ENCODE measurements at regions of chr5 and their contacts with region 1.

Region 1: GRCh38 chr5:160475864-160476438 is 54.3 kb downstream of the PTTG1 start:
- DNase-seq: no peak
- H3K4me3 Mint-ChIP-seq: peak overlapping the region; percentile 50
- H3K27ac Mint-ChIP-seq: peak overlapping the region; percentile 62
- H3K4me1 Mint-ChIP-seq: peaks cover 91% of the 10 kb centered on the region
- H3K27me3 Mint-ChIP-seq: no peaks in the 10 kb centered on the region

Region 2: GRCh38 chr5:160054831-160055230 is 421.1 kb before region 1 on chr5:
- CTCF ChIA-PET with region 1: no interaction called
- POLR2A ChIA-PET with region 1: no interaction called
- DNase-seq: no peak
- H3K4me3 Mint-ChIP-seq: no peak overlapping the region
- H3K27ac Mint-ChIP-seq: no peak overlapping the region
- H3K4me1 Mint-ChIP-seq: no peaks in the 10 kb centered on the region
- H3K27me3 Mint-ChIP-seq: no peaks in the 10 kb centered on the region

Region 3: GRCh38 chr5:160486573-160486972 is 10.6 kb after region 1 on chr5:
- CTCF ChIA-PET with region 1: interaction called, 3 read pairs
- POLR2A ChIA-PET with region 1: interaction called, 135 read pairs
- DNase-seq: peak; percentile 80
- H3K4me3 Mint-ChIP-seq: peak overlapping the region; percentile 25
- H3K27ac Mint-ChIP-seq: peak overlapping the region; percentile 83
- H3K4me1 Mint-ChIP-seq: peaks cover 69% of the 10 kb centered on the region
- H3K27me3 Mint-ChIP-seq: no peaks in the 10 kb centered on the region

Measured in activated CD4-positive, alpha-beta memory T cell treated with anti-CD3 and anti-CD28 coated beads, Interleukin-2, amount 10 ng/mL, durations not matched to agents 7 days and 5 days (primary cell).